Activated CD4-positive, alpha-beta T cell treated with anti-CD3 and anti-CD28 coated beads for 36 hours (primary cell): ENCODE measurements at regions of chr1 and their contacts with region 1.

Region 1: GRCh38 chr1:227787513-227788270 is 27.8 kb upstream of the PRSS38 start:
- DNase-seq: peak; percentile 96
- ATAC-seq: peak; percentile 93
- H3K4me3 Mint-ChIP-seq: peak overlapping the region; percentile 69
- H3K27ac Mint-ChIP-seq: peak overlapping the region; percentile 22
- H3K4me1 Mint-ChIP-seq: peaks cover 14% of the 10 kb centered on the region
- H3K27me3 Mint-ChIP-seq: no peaks in the 10 kb centered on the region

Region 2: DNA sequence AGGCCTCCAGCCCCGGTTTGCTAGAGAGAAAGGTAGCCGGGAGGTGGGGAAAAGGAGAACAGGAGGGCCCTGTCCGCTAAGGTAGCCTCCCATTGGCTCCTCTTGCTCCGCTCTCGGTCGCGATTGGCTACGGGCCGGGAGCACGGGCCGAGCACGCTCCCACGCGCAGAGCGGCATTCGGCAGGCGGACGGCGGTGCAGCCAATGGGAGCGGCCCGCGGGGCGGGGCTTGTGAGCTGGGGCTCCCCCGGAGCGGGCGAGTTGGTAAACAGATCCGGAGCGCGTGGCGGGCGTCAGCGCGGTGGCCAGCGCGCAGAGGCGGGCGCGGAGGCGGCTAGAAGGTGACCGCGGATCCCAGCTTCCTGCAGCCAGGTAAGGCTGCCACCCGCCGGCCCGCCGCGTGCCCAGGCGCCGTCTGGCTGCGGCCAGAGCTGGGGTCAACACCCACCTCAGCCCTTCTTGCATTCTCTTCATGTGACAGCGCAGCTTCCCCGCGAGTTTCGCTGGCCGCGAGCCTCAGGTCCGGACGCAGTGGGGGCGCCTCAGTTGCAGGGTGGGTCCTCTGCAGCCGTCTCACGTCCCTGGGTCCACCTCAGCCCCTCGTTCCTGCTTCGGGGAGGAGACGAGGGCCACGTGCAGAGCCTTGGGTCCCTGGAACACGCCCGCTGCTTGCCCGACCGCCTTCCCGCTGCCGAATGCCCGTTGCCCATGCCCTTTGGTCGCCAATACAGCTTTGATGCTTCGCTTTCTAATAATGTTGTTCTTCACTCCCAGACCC is 847.5 kb before region 1 on chr1 and contains the start of gene COQ8A:
- CTCF ChIA-PET with region 1: no interaction called
- POLR2A ChIA-PET with region 1: no interaction called
- intact Hi-C with region 1: loop called in 1 of 2 experiments (anchors 1 kb)
- DNase-seq: peak; percentile 100
- ATAC-seq: peak; percentile 97
- H3K4me3 Mint-ChIP-seq: peak within 1 kb of the TSS; percentile 82
- H3K27ac Mint-ChIP-seq: peak within 1 kb of the TSS; percentile 96
- H3K4me1 Mint-ChIP-seq: peaks cover 53% of the 10 kb centered on the region
- H3K27me3 Mint-ChIP-seq: no peaks in the 10 kb centered on the region
- total RNA-seq, gene COQ8A: 21.3 to 26.9 TPM

Region 3: GRCh38 chr1:227728059-227728891 is 59.4 kb before region 1 on chr1:
- CTCF ChIA-PET with region 1: no interaction called
- POLR2A ChIA-PET with region 1: no interaction called
- intact Hi-C with region 1: loop called (anchors 1 to 10 kb)
- DNase-seq: peak; percentile 89
- ATAC-seq: peak; percentile 62
- H3K4me3 Mint-ChIP-seq: peak overlapping the region; percentile 76
- H3K27ac Mint-ChIP-seq: peak overlapping the region; percentile 81
- H3K4me1 Mint-ChIP-seq: peaks cover 16% of the 10 kb centered on the region
- H3K27me3 Mint-ChIP-seq: peaks cover 3% of the 10 kb centered on the region

Region 4: DNA sequence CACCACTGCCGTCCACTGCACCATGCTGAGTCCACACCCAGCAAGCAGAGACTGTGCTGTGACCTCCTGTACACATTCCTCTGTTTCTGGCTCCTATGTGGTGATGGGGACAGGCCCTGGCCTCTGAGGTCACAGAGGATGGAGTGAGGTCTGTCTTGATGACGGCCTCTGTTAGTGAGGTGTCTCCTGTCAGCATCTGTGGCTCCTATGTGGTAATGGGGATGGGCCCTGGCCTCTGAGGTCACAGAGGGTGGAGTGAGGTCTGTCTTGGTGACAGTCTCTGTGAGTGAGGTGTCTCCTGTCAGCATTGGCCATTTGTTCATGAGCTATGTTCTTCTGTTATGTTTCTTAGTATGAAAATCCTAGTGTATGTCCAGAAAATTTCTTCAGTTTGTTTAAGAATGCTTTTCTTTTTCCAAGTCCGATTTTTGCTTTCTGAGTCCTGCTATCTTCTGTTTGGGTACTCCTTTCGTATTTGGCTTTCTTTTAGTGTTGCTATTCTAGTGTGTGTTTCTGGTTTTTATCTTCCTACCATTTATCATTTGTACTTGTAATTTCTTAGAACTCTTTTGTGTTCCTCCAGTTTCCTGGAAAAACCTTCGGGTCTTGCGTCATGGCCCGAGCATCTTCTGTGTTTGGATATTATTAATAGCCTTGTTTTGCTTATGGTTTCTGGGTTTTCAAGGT is 39.1 kb before region 1 on chr1:
- CTCF ChIA-PET with region 1: no interaction called
- POLR2A ChIA-PET with region 1: no interaction called
- intact Hi-C with region 1: no loop called
- DNase-seq: peak; percentile 60
- ATAC-seq: peak; percentile 88
- H3K4me3 Mint-ChIP-seq: no peak overlapping the region
- H3K27ac Mint-ChIP-seq: peak overlapping the region; percentile 77
- H3K4me1 Mint-ChIP-seq: peaks cover 23% of the 10 kb centered on the region
- H3K27me3 Mint-ChIP-seq: no peaks in the 10 kb centered on the region

Region 5: GRCh38 chr1:227762233-227762911 is 25.3 kb before region 1 on chr1:
- CTCF ChIA-PET with region 1: interaction called, 3 read pairs
- POLR2A ChIA-PET with region 1: no interaction called
- intact Hi-C with region 1: loop called in 1 of 2 experiments (anchors 1 kb)
- DNase-seq: peak; percentile 93
- ATAC-seq: peak; percentile 72
- H3K4me3 Mint-ChIP-seq: no peak overlapping the region
- H3K27ac Mint-ChIP-seq: peak overlapping the region; percentile 8
- H3K4me1 Mint-ChIP-seq: peaks cover 90% of the 10 kb centered on the region
- H3K27me3 Mint-ChIP-seq: no peaks in the 10 kb centered on the region

Region 6: GRCh38 chr1:228059634-228060457 is 272.2 kb after region 1 on chr1:
- CTCF ChIA-PET with region 1: no interaction called
- POLR2A ChIA-PET with region 1: no interaction called
- intact Hi-C with region 1: loop called in 1 of 2 experiments (anchors 1 kb)
- DNase-seq: peak; percentile 91
- ATAC-seq: peak; percentile 85
- H3K4me3 Mint-ChIP-seq: peak overlapping the region; percentile 51
- H3K27ac Mint-ChIP-seq: no peak overlapping the region
- H3K4me1 Mint-ChIP-seq: peaks cover 9% of the 10 kb centered on the region
- H3K27me3 Mint-ChIP-seq: peaks cover 30% of the 10 kb centered on the region

Region 7: GRCh38 chr1:228139944-228140656 is 352.4 kb after region 1 on chr1 and contains the start of gene GUK1:
- CTCF ChIA-PET with region 1: no interaction called
- POLR2A ChIA-PET with region 1: no interaction called
- intact Hi-C with region 1: loop called in 1 of 2 experiments (anchors 1 kb)
- DNase-seq: peak; percentile 100
- ATAC-seq: peak; percentile 95
- H3K4me3 Mint-ChIP-seq: peak within 1 kb of the TSS; percentile 97
- H3K27ac Mint-ChIP-seq: peak within 1 kb of the TSS; percentile 98
- H3K4me1 Mint-ChIP-seq: peaks cover 24% of the 10 kb centered on the region
- H3K27me3 Mint-ChIP-seq: peaks cover 2% of the 10 kb centered on the region
- total RNA-seq, gene GUK1: 196 to 270 TPM

Region 8: DNA sequence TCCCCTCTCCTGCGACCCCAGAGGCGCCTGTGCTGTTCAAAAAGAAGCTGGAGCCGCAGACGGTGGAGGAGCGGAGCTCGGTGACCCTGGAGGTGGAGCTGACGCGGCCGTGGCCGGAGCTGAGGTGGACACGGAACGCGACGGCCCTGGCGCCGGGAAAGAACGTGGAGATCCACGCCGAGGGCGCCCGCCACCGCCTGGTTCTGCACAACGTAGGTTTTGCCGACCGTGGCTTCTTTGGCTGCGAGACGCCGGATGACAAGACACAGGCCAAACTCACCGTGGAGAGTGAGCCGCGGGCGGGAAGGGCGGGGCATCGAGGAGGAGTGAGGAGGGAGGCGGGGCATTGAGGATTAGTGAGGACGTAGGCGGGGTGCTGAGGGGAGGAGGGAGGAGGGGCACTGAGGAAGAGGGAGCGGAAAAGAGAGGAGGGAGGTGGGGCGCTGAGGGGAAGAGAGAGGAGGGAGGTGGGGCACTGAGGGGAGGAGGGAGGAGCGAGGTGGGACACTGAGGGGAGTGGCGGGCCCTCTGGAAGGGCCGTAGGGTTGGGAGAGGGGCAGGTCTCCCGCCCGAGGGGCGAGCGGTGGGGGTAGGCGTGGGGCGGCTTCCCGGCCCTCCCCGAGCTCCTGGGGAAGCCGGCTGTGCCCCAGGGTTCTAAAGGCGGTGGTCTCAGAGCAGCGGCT is 488.2 kb after region 1 on chr1:
- CTCF ChIA-PET with region 1: no interaction called
- POLR2A ChIA-PET with region 1: no interaction called
- intact Hi-C with region 1: loop called in 1 of 2 experiments (anchors 1 kb)
- DNase-seq: peak; percentile 94
- ATAC-seq: peak; percentile 96
- H3K4me3 Mint-ChIP-seq: peak overlapping the region; percentile 71
- H3K27ac Mint-ChIP-seq: no peak overlapping the region
- H3K4me1 Mint-ChIP-seq: peaks cover 6% of the 10 kb centered on the region
- H3K27me3 Mint-ChIP-seq: no peaks in the 10 kb centered on the region